CD8-positive, alpha-beta T cell (primary cell): ENCODE measurements at regions of chr12 and their contacts with region 1.

Region 1: DNA sequence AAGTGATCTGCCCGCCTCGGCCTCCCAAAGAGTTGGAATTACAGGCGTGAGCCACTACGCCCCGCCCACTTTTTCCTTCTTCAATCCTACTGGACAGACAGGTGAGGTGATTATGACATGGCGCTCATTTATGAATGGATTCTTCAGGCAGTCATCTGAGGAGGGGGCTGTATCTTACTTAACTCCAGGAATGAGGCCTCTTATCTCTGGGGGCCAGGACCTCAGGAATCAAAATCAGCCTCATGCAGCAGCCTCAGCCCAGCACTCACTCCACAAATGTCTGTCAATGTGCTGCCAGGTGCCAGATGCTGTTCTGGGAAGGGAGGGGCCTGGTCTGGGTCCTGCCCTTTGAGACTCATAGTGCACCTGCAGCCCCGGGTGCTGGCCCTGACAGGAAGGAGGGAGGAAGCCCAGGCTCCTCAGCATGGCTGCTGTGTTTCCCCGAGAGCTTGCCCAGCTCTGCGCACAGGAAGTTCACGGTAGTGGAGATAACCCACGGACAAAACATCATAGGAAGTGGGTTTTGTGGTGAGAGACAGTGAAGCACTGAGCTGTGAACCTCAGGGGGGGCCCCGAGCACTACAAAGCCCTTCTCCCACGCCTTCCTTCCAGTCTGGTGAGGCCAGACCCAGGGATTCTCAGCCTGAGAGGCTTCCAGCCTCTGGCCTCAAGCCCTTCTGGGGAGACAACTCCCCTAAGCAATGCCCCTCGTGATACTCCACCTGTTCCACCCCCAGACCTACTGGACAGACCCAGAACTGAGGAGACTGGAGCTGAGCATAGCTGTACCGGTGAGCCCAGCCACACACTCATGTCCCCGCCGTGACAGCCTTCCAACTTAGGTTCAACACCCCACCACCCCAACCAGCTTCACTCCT is 22.3 kb downstream of the GALNT6 start:
- DNase-seq: peak; percentile 78 to 98 (median 88)
- ATAC-seq: peak; percentile 93
- H3K4me3 ChIP-seq: peak overlapping the region; percentile 38 to 49
- H3K4me3 Mint-ChIP-seq: peak overlapping the region; percentile 63
- H3K27ac ChIP-seq: peak overlapping the region; percentile 32 to 66
- H3K27ac Mint-ChIP-seq: peak overlapping the region; percentile 75
- H3K4me1 ChIP-seq: peaks cover 36% of the 10 kb centered on the region
- H3K4me1 Mint-ChIP-seq: peaks cover 49% of the 10 kb centered on the region
- H3K27me3 ChIP-seq: no peaks in the 10 kb centered on the region
- H3K27me3 Mint-ChIP-seq: no peaks in the 10 kb centered on the region
- CTCF ChIP-seq: no peak

Region 2: GRCh38 chr12:51391283-51392162 is 22.6 kb after region 1 on chr12 and contains the start of gene GALNT6:
- CTCF ChIA-PET with region 1: interaction called, 3 read pairs
- POLR2A ChIA-PET with region 1: interaction called, 8 read pairs
- intact Hi-C with region 1: loop called (anchors 1 kb)
- DNase-seq: peak; percentile 32 to 88 (median 73)
- ATAC-seq: peak; percentile 53
- H3K4me3 ChIP-seq: peak within 1 kb of the TSS; percentile 65 to 75
- H3K4me3 Mint-ChIP-seq: peak within 1 kb of the TSS; percentile 91
- H3K27ac ChIP-seq: peak within 1 kb of the TSS; percentile 41 to 69
- H3K27ac Mint-ChIP-seq: peak within 1 kb of the TSS; percentile 89
- H3K4me1 ChIP-seq: peaks cover 65% of the 10 kb centered on the region
- H3K4me1 Mint-ChIP-seq: peaks cover 75% of the 10 kb centered on the region
- H3K27me3 ChIP-seq: no peaks in the 10 kb centered on the region
- H3K27me3 Mint-ChIP-seq: no peaks in the 10 kb centered on the region
- CTCF ChIP-seq: no peak
- total RNA-seq, gene GALNT6: 10.8 to 13.4 TPM

Region 3: GRCh38 chr12:51409846-51410245 is 41.0 kb after region 1 on chr12:
- CTCF ChIA-PET with region 1: no interaction called
- POLR2A ChIA-PET with region 1: no interaction called
- intact Hi-C with region 1: no loop called
- DNase-seq: no peak
- ATAC-seq: no peak
- H3K4me3 ChIP-seq: no peak overlapping the region
- H3K4me3 Mint-ChIP-seq: no peak overlapping the region
- H3K27ac ChIP-seq: no peak overlapping the region
- H3K27ac Mint-ChIP-seq: no peak overlapping the region
- H3K4me1 ChIP-seq: no peaks in the 10 kb centered on the region
- H3K4me1 Mint-ChIP-seq: peaks cover 9% of the 10 kb centered on the region
- H3K27me3 ChIP-seq: no peaks in the 10 kb centered on the region
- H3K27me3 Mint-ChIP-seq: no peaks in the 10 kb centered on the region
- CTCF ChIP-seq: no peak

Region 4: GRCh38 chr12:51482929-51483697 is 114.2 kb after region 1 on chr12:
- CTCF ChIA-PET with region 1: no interaction called
- POLR2A ChIA-PET with region 1: no interaction called
- intact Hi-C with region 1: loop called in 1 of 2 experiments (anchors 5 kb)
- DNase-seq: peak in 8 of 9 experiments; percentile 3 to 55 (median 26)
- ATAC-seq: peak; percentile 49
- H3K4me3 ChIP-seq: peak overlapping the region in 1 of 2 experiments; percentile 23
- H3K4me3 Mint-ChIP-seq: peak overlapping the region; percentile 77
- H3K27ac ChIP-seq: peak overlapping the region; percentile 1 to 70
- H3K27ac Mint-ChIP-seq: peak overlapping the region; percentile 89
- H3K4me1 ChIP-seq: peaks cover 30% of the 10 kb centered on the region
- H3K4me1 Mint-ChIP-seq: peaks cover 40% of the 10 kb centered on the region
- H3K27me3 ChIP-seq: no peaks in the 10 kb centered on the region
- H3K27me3 Mint-ChIP-seq: no peaks in the 10 kb centered on the region
- CTCF ChIP-seq: no peak